CD4-positive, alpha-beta memory T cell (primary cell): ENCODE measurements at regions of chr15 and their contacts with region 1.

Region 1: DNA sequence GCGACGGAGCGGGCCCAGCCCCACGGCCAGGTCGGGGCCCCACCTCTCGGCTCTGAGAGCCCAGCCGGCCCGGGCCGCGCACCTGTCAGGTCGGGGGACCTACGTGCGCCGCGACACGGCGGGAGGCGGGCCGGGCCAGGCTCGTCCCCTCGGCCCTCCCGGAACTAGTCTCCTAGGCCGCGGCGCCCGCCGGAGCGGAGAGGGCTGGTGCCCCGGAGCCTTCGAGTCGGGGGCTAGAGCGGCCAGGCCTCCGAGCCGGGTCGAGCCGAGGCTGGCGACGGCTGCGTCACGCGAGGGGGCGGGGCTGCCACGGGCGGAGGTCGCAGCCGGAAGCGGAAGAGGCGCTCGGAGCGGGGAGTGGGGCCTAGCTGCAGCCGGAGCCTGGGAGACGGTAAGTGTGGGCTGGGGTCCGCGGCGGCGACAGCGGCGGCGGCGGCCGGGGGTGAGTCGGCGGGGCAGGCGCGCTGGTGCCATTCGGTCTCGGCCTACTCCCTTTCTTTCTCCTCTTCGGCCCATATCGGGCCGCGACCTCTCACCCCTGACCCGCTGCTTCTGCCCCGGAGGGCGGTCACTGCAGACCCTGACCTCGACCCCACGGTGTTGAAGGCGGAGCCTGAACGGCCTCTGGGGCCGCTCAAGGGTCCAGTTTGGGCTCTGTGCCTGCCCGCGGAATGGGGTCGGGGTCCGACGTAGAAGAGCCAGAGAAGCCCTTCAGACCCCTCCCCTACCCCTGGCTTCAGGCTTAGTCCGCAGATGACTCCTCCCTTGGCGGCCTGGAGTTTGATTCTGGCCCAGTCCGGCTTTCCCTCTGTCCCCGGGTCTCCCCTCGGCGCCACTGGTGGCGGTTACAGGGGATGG is at the start of gene CLK3:
- DNase-seq: peak; percentile 95 to 97 (median 96)
- H3K4me3 ChIP-seq: peak within 1 kb of the TSS; percentile 98 to 100
- H3K4me3 Mint-ChIP-seq: peak within 1 kb of the TSS; percentile 92 to 98 (median 94)
- H3K27ac ChIP-seq: peak within 1 kb of the TSS; percentile 99
- H3K27ac Mint-ChIP-seq: peak within 1 kb of the TSS; percentile 98 to 99 (median 98)
- H3K4me1 ChIP-seq: peaks cover 44% of the 10 kb centered on the region
- H3K4me1 Mint-ChIP-seq: peaks cover 28 to 59% (median 31%) of the 10 kb centered on the region in 4 donors
- H3K27me3 ChIP-seq: no peaks in the 10 kb centered on the region
- H3K27me3 Mint-ChIP-seq: no peaks in the 10 kb centered on the region
- total RNA-seq, gene CLK3: 163 to 167 TPM

Region 2: DNA sequence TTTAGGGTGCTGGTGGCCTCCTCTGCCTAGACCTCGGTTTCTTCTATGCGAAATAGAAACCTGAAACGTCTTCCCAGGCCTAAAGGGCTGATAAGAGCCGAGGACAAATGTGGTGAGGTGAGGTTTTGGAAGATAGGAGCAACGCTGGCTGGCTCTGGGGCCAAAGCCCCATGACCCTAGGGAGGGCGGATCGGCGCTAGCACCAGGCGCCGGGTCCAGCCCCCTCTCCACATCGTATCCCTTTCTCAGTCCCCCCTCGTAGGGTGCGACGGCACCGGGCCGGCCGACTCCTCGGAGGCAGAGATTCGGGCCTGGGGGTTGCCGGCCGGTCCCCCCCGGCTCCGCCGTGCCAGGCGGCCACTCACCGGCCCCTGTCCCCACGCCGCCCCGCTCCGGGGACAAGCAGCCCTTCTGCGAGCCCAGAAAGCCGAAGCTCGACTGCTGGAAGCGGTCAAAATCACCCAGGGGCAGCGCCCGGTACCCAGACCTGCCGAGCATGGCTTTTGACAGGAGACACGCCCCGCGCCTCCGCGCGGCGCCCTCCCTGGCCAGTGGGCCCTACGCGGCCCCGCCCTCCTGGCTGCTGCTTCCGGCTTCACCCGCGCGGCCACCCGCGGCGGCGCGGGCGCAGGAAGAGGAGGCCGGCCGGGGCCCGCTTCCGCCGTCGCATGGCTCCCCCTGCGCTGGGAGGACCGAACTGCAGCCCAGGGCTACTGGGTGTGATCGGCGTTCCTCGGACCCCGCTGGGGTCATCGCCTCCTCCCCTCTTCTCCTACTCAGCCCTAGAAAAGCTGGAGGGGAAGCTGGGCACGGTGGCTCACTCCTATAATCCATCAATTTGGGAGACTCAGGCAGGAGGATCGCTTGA is 623.8 kb before region 1 on chr15 and contains the start of gene STOML1:
- CTCF ChIA-PET with region 1: no interaction called
- POLR2A ChIA-PET with region 1: no interaction called
- intact Hi-C with region 1: loop called (anchors 2 kb)
- DNase-seq: peak; percentile 91 to 94 (median 91)
- H3K4me3 ChIP-seq: peak within 1 kb of the TSS; percentile 66 to 72
- H3K4me3 Mint-ChIP-seq: peak within 1 kb of the TSS; percentile 80 to 99 (median 84)
- H3K27ac ChIP-seq: peak within 1 kb of the TSS; percentile 67
- H3K27ac Mint-ChIP-seq: peak within 1 kb of the TSS; percentile 75 to 90 (median 86)
- H3K4me1 ChIP-seq: peaks cover 42% of the 10 kb centered on the region
- H3K4me1 Mint-ChIP-seq: peaks cover 26 to 59% (median 39%) of the 10 kb centered on the region in 4 donors
- H3K27me3 ChIP-seq: no peaks in the 10 kb centered on the region
- H3K27me3 Mint-ChIP-seq: no peaks in the 10 kb centered on the region
- total RNA-seq, gene STOML1: 10.8 to 11.1 TPM

Region 3: DNA sequence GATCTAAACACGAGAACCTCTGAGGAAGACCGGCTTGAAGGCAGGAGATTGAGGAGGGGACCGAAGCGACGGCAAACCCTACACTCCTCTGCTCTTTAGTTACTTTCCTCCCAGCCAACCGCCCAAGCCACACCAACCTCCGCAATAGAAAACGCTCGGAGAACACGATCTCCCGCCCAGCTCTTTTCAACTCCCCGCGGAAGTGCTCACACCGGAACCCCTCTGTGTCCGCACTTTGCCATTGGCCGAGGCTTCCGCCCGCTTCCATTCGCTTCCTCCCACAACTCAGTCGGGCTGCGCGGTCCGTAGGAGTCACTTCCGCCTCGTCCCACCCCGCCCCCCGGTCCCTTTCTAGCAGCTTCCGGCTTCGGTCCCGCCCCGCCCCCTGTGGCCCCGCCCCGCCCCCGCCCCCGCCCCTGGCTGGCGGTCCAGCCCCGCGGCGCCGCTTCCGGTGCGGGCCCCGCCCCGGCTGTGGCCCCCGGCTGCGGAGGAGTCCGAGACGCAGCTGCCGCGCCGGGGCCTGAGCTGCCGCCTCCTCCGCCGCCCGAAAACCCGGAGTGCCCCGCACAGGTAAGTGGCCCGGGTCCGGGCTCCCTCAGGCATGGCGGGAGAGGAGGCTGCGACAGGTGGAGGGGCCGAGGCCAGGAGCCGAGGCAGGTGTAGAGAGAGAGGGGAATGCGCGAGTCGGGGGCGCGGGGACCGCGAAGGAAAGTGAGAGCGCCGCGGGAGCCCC is 74.8 kb before region 1 on chr15 and contains the start of gene ARID3B:
- CTCF ChIA-PET with region 1: interaction called, 9 read pairs
- POLR2A ChIA-PET with region 1: interaction called, 68 read pairs
- intact Hi-C with region 1: loop called (anchors 1 kb)
- DNase-seq: peak; percentile 89 to 96 (median 93)
- H3K4me3 ChIP-seq: peak within 1 kb of the TSS; percentile 64 to 79
- H3K4me3 Mint-ChIP-seq: peak within 1 kb of the TSS; percentile 94 to 100 (median 98)
- H3K27ac ChIP-seq: peak within 1 kb of the TSS; percentile 77
- H3K27ac Mint-ChIP-seq: peak within 1 kb of the TSS; percentile 87 to 99 (median 95)
- H3K4me1 ChIP-seq: peaks cover 39% of the 10 kb centered on the region
- H3K4me1 Mint-ChIP-seq: peaks cover 37 to 62% (median 51%) of the 10 kb centered on the region in 4 donors
- H3K27me3 ChIP-seq: no peaks in the 10 kb centered on the region
- H3K27me3 Mint-ChIP-seq: no peaks in the 10 kb centered on the region
- total RNA-seq, gene ARID3B: 32.9 TPM

Region 4: GRCh38 chr15:74598126-74598842 is 17.5 kb before region 1 on chr15:
- CTCF ChIA-PET with region 1: interaction called, 5 read pairs
- POLR2A ChIA-PET with region 1: interaction called, 61 read pairs
- intact Hi-C with region 1: loop called (anchors 1 kb)
- DNase-seq: peak; percentile 77 to 87 (median 81)
- H3K4me3 ChIP-seq: peak overlapping the region; percentile 67 to 76
- H3K4me3 Mint-ChIP-seq: peak overlapping the region; percentile 93 to 100 (median 100)
- H3K27ac ChIP-seq: peak overlapping the region; percentile 82
- H3K27ac Mint-ChIP-seq: peak overlapping the region; percentile 88 to 100 (median 99)
- H3K4me1 ChIP-seq: peaks cover 14% of the 10 kb centered on the region
- H3K4me1 Mint-ChIP-seq: peaks cover 7 to 25% (median 16%) of the 10 kb centered on the region in 4 donors
- H3K27me3 ChIP-seq: no peaks in the 10 kb centered on the region
- H3K27me3 Mint-ChIP-seq: no peaks in the 10 kb centered on the region

Region 5: DNA sequence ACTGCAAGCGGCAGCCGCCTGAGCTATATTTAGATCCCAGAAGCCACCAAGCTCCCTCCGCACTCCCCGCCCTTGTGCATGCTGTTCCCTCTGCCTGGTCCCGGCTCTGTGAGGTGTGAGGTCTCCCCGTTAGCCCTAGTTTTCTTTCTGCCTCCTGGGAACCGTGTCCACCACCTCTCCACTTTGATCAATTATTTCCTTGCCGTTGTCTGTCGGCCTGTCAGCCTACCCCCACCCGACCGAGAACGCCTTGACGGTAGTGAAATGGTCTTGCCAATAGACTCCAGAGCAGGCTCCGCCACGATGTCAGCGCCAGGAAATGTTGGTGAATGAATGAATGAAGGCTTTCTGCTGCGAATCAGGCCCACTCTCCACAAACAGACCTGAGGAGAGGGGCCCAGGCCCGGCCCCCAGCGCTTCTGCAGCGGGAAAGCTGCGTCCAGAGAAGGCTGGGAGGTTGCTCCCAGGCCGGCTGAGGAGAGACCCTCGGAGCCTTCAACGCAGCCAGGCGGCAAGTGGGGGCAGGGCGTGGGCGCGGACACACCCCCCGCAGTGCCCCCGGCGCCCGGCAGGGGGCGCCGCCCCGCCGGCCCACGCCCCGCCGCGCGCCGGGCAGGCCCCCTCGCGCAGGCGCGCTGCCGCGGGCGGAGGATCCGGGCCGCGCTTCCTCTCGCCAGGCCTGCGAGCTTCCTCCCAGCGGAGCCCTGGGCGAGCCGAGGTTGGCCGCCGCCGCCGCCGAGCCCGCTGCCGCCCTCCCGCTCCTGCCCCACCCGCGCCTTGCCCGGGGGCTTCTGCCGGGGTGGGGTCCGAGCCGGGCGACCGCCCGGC is 165.9 kb after region 1 on chr15 and contains the start of gene CSK:
- CTCF ChIA-PET with region 1: interaction called, 3 read pairs
- POLR2A ChIA-PET with region 1: interaction called, 35 read pairs
- intact Hi-C with region 1: loop called (anchors 5 kb)
- DNase-seq: peak; percentile 74 to 87 (median 84)
- H3K4me3 ChIP-seq: peak within 1 kb of the TSS; percentile 93 to 97
- H3K4me3 Mint-ChIP-seq: peak within 1 kb of the TSS; percentile 90 to 97 (median 96)
- H3K27ac ChIP-seq: peak within 1 kb of the TSS; percentile 86
- H3K27ac Mint-ChIP-seq: peak within 1 kb of the TSS; percentile 95 to 98 (median 98)
- H3K4me1 ChIP-seq: peaks cover 80% of the 10 kb centered on the region
- H3K4me1 Mint-ChIP-seq: peaks cover 48 to 90% (median 62%) of the 10 kb centered on the region in 4 donors
- H3K27me3 ChIP-seq: no peaks in the 10 kb centered on the region
- H3K27me3 Mint-ChIP-seq: no peaks in the 10 kb centered on the region
- total RNA-seq, gene CSK: 234 to 247 TPM

Region 6: DNA sequence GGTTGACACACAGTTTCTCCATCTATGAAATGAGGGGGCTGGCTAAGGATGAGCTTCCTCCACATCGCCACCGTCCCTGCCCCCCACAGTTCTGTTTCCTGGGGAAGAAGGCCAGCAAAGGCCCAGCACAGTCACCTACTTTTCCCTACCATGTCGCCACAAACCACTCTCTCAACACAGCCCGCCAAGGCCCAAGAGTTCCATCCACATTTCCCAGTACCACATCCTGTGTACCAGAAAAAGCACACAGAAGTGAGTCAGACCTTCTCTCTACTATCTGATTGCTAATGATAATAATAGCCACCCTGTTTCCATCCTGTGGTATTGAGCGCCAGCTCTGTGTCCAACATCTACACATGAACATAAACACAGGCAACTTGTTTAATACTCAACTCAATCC is 555.7 kb after region 1 on chr15:
- CTCF ChIA-PET with region 1: no interaction called
- POLR2A ChIA-PET with region 1: no interaction called
- intact Hi-C with region 1: no loop called
- DNase-seq: no peak
- H3K4me3 ChIP-seq: no peak overlapping the region
- H3K4me3 Mint-ChIP-seq: no peak overlapping the region
- H3K27ac ChIP-seq: no peak overlapping the region
- H3K27ac Mint-ChIP-seq: peak overlapping the region in 2 of 7 donors; percentile 4 to 37
- H3K4me1 ChIP-seq: peaks cover 9% of the 10 kb centered on the region
- H3K4me1 Mint-ChIP-seq: peaks cover 4 to 13% (median 7%) of the 10 kb centered on the region in 4 donors
- H3K27me3 ChIP-seq: no peaks in the 10 kb centered on the region
- H3K27me3 Mint-ChIP-seq: no peaks in the 10 kb centered on the region

Region 7: GRCh38 chr15:75201609-75202250 is 586.0 kb after region 1 on chr15 and contains the start of gene C15orf39:
- CTCF ChIA-PET with region 1: no interaction called
- POLR2A ChIA-PET with region 1: interaction called, 3 read pairs
- intact Hi-C with region 1: loop called (anchors 5 kb)
- DNase-seq: peak; percentile 71 to 87 (median 83)
- H3K4me3 ChIP-seq: peak within 1 kb of the TSS; percentile 65 to 70
- H3K4me3 Mint-ChIP-seq: peak within 1 kb of the TSS; percentile 89 to 97 (median 94)
- H3K27ac ChIP-seq: peak within 1 kb of the TSS; percentile 69
- H3K27ac Mint-ChIP-seq: peak within 1 kb of the TSS; percentile 90 to 96 (median 93)
- H3K4me1 ChIP-seq: peaks cover 40% of the 10 kb centered on the region
- H3K4me1 Mint-ChIP-seq: peaks cover 16 to 58% (median 30%) of the 10 kb centered on the region in 4 donors
- H3K27me3 ChIP-seq: no peaks in the 10 kb centered on the region
- H3K27me3 Mint-ChIP-seq: no peaks in the 10 kb centered on the region
- total RNA-seq, gene C15orf39: 25.9 to 27.0 TPM